Panc1 (cell line): ENCODE measurements at regions of chr5 and their contacts with region 1.

Region 1: GRCh38 chr5:62403434-62404250 is at the start of gene DIMT1:
- DNase-seq: peak; percentile 92
- ATAC-seq: peak; percentile 100
- H3K4me3 ChIP-seq: peak within 1 kb of the TSS; percentile 69 to 85
- H3K27ac ChIP-seq: peak within 1 kb of the TSS; percentile 98
- H3K4me1 ChIP-seq: peaks cover 6% of the 10 kb centered on the region; the same call in 1 of the 2 replicates
- H3K27me3 ChIP-seq: no peaks in the 10 kb centered on the region
- CTCF ChIP-seq: no peak
- total RNA-seq, gene DIMT1: 37.2 TPM

Region 2: DNA sequence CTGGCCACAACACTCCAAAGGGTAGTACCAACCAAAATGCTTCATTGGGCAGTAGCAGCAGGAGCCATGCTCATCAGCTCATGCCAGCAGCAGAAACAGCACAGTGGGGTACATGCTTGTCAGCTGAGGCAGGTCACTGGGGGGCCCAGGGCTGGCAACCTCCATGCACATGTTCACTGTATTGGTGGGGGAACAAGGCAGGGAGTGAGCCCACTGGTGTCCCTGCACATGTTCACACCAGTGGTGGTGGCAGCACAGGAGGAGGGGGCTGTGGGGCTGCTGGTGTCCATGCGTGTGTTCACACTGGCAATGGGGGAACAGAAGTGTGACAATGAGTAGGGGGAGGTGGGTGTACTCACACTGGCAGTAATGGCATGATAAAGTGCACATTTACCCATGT is 351.9 kb before region 1 on chr5:
- CTCF ChIA-PET with region 1: no interaction called
- POLR2A ChIA-PET with region 1: no interaction called
- in situ Hi-C with region 1: no loop called
- intact Hi-C with region 1: no loop called
- DNase-seq: no peak
- ATAC-seq: no peak
- H3K4me3 ChIP-seq: no peak overlapping the region
- H3K27ac ChIP-seq: no peak overlapping the region
- H3K4me1 ChIP-seq: no peaks in the 10 kb centered on the region
- H3K27me3 ChIP-seq: no peaks in the 10 kb centered on the region
- CTCF ChIP-seq: no peak

Region 3: DNA sequence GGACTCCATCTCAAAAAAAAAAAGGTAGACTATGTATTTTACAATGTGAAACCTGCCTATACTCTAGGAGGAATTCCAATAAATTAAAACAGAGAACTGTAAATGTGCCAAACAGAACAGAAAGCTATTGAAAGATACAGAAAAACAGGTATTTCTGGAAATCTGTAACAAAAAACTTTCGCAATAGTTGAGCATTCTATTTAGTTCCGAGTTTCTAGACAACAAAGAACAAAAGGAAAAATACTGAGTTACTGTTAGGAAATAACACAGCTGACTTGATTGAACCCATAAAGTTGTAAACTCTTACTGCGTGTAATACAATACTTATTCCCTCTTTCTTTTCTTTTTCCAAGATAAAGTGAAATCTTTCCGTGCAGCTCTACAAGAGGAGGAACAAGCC is 18.5 kb before region 1 on chr5:
- CTCF ChIA-PET with region 1: no interaction called
- POLR2A ChIA-PET with region 1: interaction called, 11 read pairs
- in situ Hi-C with region 1: no loop called
- intact Hi-C with region 1: no loop called
- DNase-seq: no peak
- ATAC-seq: no peak
- H3K4me3 ChIP-seq: no peak overlapping the region
- H3K27ac ChIP-seq: no peak overlapping the region
- H3K4me1 ChIP-seq: no peaks in the 10 kb centered on the region
- H3K27me3 ChIP-seq: no peaks in the 10 kb centered on the region
- CTCF ChIP-seq: no peak